ENCODE measurements at regions of chr11 and their contacts with region 1.

Region 1: DNA sequence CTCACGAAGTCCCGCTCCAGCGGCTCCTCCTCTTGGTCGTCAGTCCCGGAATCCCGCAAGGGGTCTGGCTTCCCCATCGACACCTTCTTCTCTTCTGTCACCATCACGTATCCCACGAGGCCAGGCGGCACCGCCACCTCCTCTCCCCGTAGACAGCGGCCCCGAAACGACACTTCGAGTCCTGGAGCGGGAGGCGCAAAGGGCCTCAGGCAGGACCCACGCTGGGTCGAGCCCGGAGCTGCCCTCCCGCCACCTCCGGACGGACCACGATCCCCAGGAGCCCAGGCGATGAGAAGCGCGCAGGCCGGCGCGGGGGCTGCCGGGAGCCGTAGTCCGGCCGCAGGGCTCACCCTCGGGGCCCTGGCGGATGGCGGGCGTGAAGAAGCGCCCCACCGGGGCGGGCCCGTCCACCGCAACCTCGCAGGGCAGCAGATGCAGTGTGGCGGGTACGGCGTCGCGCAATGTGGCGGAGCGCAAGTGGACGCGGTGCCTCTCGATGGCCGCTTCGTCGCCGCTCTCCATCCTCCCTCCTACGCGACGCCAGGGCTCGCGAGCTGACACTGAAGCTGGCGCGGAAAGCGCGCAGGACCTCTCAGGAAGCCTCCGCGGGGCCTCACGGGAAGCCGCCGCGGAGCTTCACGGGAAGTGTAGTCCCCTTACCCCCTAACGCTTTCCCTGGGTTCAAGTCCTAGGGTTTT is at the start of gene RNASEH2C:
- DNase-seq: peak; percentile 97
- H3K4me3 ChIP-seq: peak within 1 kb of the TSS; percentile 85
- H3K27ac ChIP-seq: peak within 1 kb of the TSS; percentile 84
- H3K4me1 ChIP-seq: peaks cover 8% of the 10 kb centered on the region
- H3K27me3 ChIP-seq: no peaks in the 10 kb centered on the region
- CTCF ChIP-seq: no peak
- total RNA-seq, gene RNASEH2C: 73.6 and 80.2 TPM in 2 replicates

Region 2: GRCh38 chr11:65251476-65251875 is 468.9 kb before region 1 on chr11:
- CTCF ChIA-PET with region 1: no interaction called
- POLR2A ChIA-PET with region 1: no interaction called
- intact Hi-C with region 1: no loop called
- DNase-seq: no peak
- H3K4me3 ChIP-seq: no peak overlapping the region
- H3K27ac ChIP-seq: no peak overlapping the region
- H3K4me1 ChIP-seq: no peaks in the 10 kb centered on the region
- H3K27me3 ChIP-seq: no peaks in the 10 kb centered on the region
- CTCF ChIP-seq: no peak

Region 3: GRCh38 chr11:65700391-65700790 is 20.0 kb before region 1 on chr11:
- CTCF ChIA-PET with region 1: no interaction called
- POLR2A ChIA-PET with region 1: interaction called, 10 read pairs
- intact Hi-C with region 1: no loop called
- DNase-seq: peak; percentile 32
- H3K4me3 ChIP-seq: no peak overlapping the region
- H3K27ac ChIP-seq: no peak overlapping the region
- H3K4me1 ChIP-seq: no peaks in the 10 kb centered on the region
- H3K27me3 ChIP-seq: no peaks in the 10 kb centered on the region
- CTCF ChIP-seq: no peak

Region 4: DNA sequence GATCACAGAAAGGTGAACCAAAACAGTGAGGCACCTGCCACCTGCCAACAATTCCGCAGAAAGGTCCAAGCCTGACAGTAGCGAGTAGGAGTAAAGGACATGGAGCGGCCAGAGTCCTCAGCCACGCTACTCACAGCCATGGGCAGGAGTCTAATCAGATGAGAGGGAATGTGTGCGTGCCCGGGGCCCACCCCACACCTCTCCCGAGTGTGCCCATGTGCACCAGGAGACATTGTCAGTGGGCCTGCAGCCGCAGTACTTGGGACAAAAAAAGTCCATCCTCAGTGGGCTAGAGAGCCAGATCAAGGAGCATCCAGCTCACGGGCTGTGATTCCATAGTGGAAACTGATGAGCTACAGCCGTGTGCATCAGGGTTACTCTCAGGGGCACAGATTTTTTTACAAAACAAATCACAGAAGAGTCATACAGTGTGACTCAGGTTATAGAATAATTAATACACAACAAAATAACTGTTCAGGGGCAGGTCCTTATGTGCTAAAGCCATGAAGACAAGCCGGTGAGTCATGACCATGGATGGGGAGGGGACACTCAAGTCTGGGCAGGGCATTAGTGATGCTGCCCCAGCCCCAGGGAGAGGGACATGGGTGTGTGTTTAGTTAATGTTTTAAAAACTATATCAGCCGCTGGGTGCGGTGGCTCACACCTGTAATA is 253.2 kb after region 1 on chr11:
- CTCF ChIA-PET with region 1: no interaction called
- POLR2A ChIA-PET with region 1: interaction called, 26 read pairs
- intact Hi-C with region 1: no loop called
- DNase-seq: no peak
- H3K4me3 ChIP-seq: no peak overlapping the region
- H3K27ac ChIP-seq: no peak overlapping the region
- H3K4me1 ChIP-seq: no peaks in the 10 kb centered on the region
- H3K27me3 ChIP-seq: no peaks in the 10 kb centered on the region
- CTCF ChIP-seq: no peak